Heart right ventricle (tissue), 16 donors: ENCODE measurements at regions of chr12 and their contacts with region 1.

Region 1: DNA sequence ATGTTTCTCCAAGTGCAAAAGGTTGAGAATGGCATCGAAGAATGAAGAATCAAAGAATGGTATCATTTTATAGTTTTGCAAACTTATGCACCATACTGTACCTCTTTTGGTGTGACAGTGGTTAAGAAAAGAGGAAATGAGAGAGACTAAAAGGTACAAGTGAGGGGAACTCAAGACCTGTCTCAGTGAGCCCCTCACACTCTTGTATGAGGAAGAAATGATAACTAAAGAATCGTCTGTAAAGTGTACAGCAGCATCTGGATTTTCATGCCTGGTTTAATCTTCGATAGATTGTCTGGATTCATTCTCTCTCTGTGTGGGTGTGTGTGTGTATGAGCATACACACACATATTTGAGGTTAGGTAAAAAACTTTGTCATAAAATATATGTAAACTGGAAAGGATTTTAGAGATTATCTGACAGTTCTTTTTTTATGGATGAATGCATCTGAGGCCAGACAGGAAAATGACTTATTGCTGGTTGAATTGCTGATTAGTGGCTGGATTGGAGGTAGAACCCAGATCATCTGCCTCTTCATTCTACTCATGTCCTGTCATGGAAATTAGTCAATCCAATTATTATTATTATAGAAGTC is 16.0 kb upstream of the SLC38A2 start:
- DNase-seq: no peak
- ATAC-seq: no peak
- H3K4me3 ChIP-seq: no peak overlapping the region
- H3K27ac ChIP-seq: peak overlapping the region in 6 of 10 donors; percentile 9 to 24 (median 15)
- H3K4me1 ChIP-seq: peaks cover 0 to 70% (median 47%) of the 10 kb centered on the region in 9 donors
- H3K27me3 ChIP-seq: no peaks in the 10 kb centered on the region
- CTCF ChIP-seq: no peak

Region 2: GRCh38 chr12:46419675-46420074 is 31.2 kb after region 1 on chr12:
- intact Hi-C with region 1: no loop called
- DNase-seq: no peak
- ATAC-seq: no peak
- H3K4me3 ChIP-seq: no peak overlapping the region
- H3K27ac ChIP-seq: no peak overlapping the region
- H3K4me1 ChIP-seq: peaks cover 0 to 11% (median 0%) of the 10 kb centered on the region in 9 donors
- H3K27me3 ChIP-seq: no peaks in the 10 kb centered on the region
- CTCF ChIP-seq: no peak

Region 3: GRCh38 chr12:46430340-46430948 is 41.9 kb after region 1 on chr12:
- intact Hi-C with region 1: loop called in 3 of 10 experiments (anchors 2 to 10 kb)
- DNase-seq: peak in 1 of 2 donors; percentile 16
- ATAC-seq: peak in 7 of 8 donors; percentile 54 to 86 (median 76)
- H3K4me3 ChIP-seq: no peak overlapping the region
- H3K27ac ChIP-seq: peak overlapping the region in 8 of 10 donors; percentile 49 to 83 (median 71)
- H3K4me1 ChIP-seq: peaks cover 0 to 34% (median 28%) of the 10 kb centered on the region in 9 donors
- H3K27me3 ChIP-seq: no peaks in the 10 kb centered on the region
- CTCF ChIP-seq: no peak